ENCODE measurements at regions of chr20 and their contacts with region 1.

Region 1: GRCh38 chr20:10647465-10647864 is 26.3 kb downstream of the JAG1 start:
- DNase-seq: no peak
- H3K4me3 ChIP-seq: no peak overlapping the region
- H3K27ac ChIP-seq: no peak overlapping the region
- H3K4me1 ChIP-seq: peaks cover 4% of the 10 kb centered on the region
- H3K27me3 ChIP-seq: no peaks in the 10 kb centered on the region
- CTCF ChIP-seq: peak; percentile 26 to 42

Region 2: GRCh38 chr20:10469599-10469998 is 177.9 kb before region 1 on chr20:
- CTCF ChIA-PET with region 1: no interaction called
- dilution Hi-C with region 1: no loop called
- in situ Hi-C with region 1: loop called in 1 of 2 experiments (anchors 25 kb)
- intact Hi-C with region 1: no loop called
- DNase-seq: peak; percentile 73
- H3K4me3 ChIP-seq: no peak overlapping the region
- H3K27ac ChIP-seq: peak overlapping the region; percentile 37
- H3K4me1 ChIP-seq: peaks cover 20% of the 10 kb centered on the region
- H3K27me3 ChIP-seq: no peaks in the 10 kb centered on the region
- CTCF ChIP-seq: peak; percentile 73 to 75

Region 3: GRCh38 chr20:11067359-11067758 is 419.9 kb after region 1 on chr20:
- CTCF ChIA-PET with region 1: no interaction called
- dilution Hi-C with region 1: no loop called
- in situ Hi-C with region 1: no loop called
- intact Hi-C with region 1: no loop called
- DNase-seq: no peak
- H3K4me3 ChIP-seq: no peak overlapping the region
- H3K27ac ChIP-seq: no peak overlapping the region
- H3K4me1 ChIP-seq: no peaks in the 10 kb centered on the region
- H3K27me3 ChIP-seq: no peaks in the 10 kb centered on the region
- CTCF ChIP-seq: no peak

Region 4: DNA sequence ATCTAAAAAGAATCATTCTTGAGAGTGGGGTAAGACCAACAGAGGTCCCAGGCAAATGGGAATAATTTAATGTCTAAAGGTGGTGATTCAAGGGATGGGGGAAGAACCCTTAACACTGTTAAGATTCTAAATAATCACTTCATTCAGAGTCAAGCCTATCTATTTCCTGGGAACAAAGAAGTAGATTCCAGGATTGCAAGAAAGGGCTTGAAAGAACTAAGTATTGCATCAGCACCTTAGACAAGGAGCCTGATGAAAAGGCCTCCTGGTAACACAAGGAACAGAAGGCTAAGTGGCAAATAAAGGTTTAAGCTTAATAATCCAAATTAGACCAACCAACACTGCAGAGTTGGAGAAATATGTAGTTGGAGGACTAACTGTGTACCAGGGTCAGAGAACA is 649.5 kb after region 1 on chr20:
- CTCF ChIA-PET with region 1: no interaction called
- dilution Hi-C with region 1: no loop called
- in situ Hi-C with region 1: no loop called
- intact Hi-C with region 1: no loop called
- DNase-seq: peak; percentile 62
- H3K4me3 ChIP-seq: no peak overlapping the region
- H3K27ac ChIP-seq: peak overlapping the region; percentile 35
- H3K4me1 ChIP-seq: peaks cover 18% of the 10 kb centered on the region
- H3K27me3 ChIP-seq: no peaks in the 10 kb centered on the region
- CTCF ChIP-seq: no peak